ENCODE measurements at regions of chr7 and their contacts with region 1.

Region 1: DNA sequence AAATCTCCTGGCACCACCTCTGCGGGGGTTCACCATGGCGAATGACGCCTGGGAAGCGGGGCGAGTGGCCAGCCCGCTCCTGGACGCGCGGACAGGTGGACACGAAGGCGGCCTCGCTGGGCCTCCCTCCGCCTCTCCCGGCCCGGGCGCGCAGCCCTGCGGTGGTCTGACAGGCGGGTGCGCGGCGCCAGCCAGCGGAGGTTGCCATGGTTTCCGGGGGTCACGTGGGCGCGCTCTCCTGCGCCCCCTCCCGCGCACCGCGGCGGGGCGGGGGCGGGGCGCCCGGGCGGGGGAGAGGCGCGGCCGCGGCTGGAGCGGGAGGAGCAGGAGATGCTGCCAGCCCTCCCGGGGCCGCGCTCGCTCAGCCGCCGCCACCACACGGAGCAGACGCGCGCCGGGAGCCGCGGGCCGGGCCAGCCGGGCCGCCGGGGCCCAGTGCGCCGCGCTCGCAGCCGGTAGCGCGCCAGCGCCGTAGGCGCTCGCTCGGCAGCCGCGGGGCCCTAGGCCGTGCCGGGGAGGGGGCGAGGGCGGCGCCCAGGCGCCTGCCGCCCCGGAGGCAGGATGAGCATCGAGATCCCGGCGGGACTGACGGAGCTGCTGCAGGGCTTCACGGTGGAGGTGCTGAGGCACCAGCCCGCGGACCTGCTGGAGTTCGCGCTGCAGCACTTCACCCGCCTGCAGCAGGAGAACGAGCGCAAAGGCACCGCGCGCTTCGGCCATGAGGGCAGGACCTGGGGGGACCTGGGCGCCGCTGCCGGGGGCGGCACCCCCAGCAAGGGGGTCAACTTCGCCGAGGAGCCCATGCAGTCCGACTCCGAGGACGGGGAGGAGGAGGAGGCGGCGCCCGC is at the start of gene PRKAR2B:
- DNase-seq: peak; percentile 69 to 81 (median 79)
- ATAC-seq: peak; percentile 96
- H3K4me3 ChIP-seq: peak within 1 kb of the TSS; percentile 53
- H3K4me3 Mint-ChIP-seq: peak within 1 kb of the TSS; percentile 78 to 96 (median 90)
- H3K27ac ChIP-seq: peak within 1 kb of the TSS; percentile 33
- H3K27ac Mint-ChIP-seq: peak within 1 kb of the TSS in 7 of 9 donors; percentile 48 to 89 (median 77)
- H3K4me1 ChIP-seq: peaks cover 4 to 10% of the 10 kb centered on the region in 2 donors
- H3K4me1 Mint-ChIP-seq: peaks cover 11 to 19% (median 15%) of the 10 kb centered on the region in 7 donors
- H3K27me3 ChIP-seq: peaks cover 4 to 8% of the 10 kb centered on the region in 2 donors
- H3K27me3 Mint-ChIP-seq: peaks cover 13 to 47% (median 29%) of the 10 kb centered on the region in 5 donors
- total RNA-seq, gene PRKAR2B: 0.43 to 5.0 (median 0.67) TPM

Region 2: DNA sequence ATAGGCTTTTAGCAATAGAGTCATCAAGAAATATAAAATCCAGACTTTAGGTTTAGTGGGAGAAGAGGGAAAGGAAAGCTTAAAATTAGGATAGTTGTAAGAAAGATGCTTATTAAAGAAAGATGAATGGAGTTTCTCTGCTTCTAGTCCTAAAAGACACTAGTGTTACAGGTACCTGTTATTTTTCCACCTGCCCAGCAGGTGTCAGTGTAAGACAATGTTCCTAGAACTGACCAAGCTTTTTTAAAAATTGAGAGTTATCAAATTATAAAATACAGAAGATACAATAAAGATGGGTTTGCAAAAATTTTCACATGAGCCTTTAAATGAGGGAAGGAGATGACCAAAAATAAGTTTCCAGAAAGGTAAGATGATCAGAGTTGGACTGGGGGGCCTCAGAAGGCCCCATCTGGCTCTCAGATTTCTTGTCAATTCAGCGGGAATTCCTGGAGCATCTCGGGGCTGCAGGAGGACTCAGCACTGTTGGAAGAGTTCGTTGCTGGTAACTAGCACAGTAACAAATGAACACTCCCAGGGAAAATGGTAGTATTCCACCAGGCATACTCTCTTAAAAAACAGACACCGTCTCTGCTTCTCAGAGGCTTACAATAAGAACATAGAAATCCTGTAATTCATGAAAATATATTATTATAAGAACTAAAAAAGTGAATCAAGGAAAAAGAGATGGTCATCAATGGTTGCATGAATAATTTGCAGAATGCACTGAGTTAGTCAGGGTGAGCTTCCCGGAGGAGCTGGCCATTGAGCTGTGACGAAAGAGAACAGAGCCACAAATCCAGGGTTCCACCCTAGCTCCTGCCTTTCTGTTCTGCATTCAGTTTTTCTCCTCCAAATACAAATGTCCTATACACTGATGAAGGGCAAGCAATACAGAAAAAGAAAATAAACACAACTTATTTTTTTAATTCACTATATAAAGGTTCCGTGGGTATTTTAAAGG is 251.3 kb before region 1 on chr7:
- CTCF ChIA-PET with region 1: no interaction called
- POLR2A ChIA-PET with region 1: no interaction called
- intact Hi-C with region 1: loop called (anchors 1 to 5 kb)
- DNase-seq: peak in 6 of 9 donors; percentile 31 to 59 (median 51)
- ATAC-seq: peak; percentile 76
- H3K4me3 ChIP-seq: no peak overlapping the region
- H3K4me3 Mint-ChIP-seq: no peak overlapping the region
- H3K27ac ChIP-seq: no peak overlapping the region
- H3K27ac Mint-ChIP-seq: no peak overlapping the region
- H3K4me1 ChIP-seq: no peaks in the 10 kb centered on the region
- H3K4me1 Mint-ChIP-seq: peaks cover 0 to 4% (median 0%) of the 10 kb centered on the region in 7 donors
- H3K27me3 ChIP-seq: no peaks in the 10 kb centered on the region
- H3K27me3 Mint-ChIP-seq: no peaks in the 10 kb centered on the region

Region 3: GRCh38 chr7:106895246-106895864 is 149.2 kb before region 1 on chr7:
- CTCF ChIA-PET with region 1: no interaction called
- POLR2A ChIA-PET with region 1: no interaction called
- intact Hi-C with region 1: loop called in 1 of 2 experiments (anchors 10 kb)
- DNase-seq: no peak
- ATAC-seq: peak; percentile 64
- H3K4me3 ChIP-seq: no peak overlapping the region
- H3K4me3 Mint-ChIP-seq: no peak overlapping the region
- H3K27ac ChIP-seq: no peak overlapping the region
- H3K27ac Mint-ChIP-seq: peak overlapping the region in 1 of 9 donors; percentile 16
- H3K4me1 ChIP-seq: peaks cover 1 to 11% of the 10 kb centered on the region in 2 donors
- H3K4me1 Mint-ChIP-seq: peaks cover 19 to 59% (median 34%) of the 10 kb centered on the region in 7 donors
- H3K27me3 ChIP-seq: no peaks in the 10 kb centered on the region
- H3K27me3 Mint-ChIP-seq: no peaks in the 10 kb centered on the region

Region 4: DNA sequence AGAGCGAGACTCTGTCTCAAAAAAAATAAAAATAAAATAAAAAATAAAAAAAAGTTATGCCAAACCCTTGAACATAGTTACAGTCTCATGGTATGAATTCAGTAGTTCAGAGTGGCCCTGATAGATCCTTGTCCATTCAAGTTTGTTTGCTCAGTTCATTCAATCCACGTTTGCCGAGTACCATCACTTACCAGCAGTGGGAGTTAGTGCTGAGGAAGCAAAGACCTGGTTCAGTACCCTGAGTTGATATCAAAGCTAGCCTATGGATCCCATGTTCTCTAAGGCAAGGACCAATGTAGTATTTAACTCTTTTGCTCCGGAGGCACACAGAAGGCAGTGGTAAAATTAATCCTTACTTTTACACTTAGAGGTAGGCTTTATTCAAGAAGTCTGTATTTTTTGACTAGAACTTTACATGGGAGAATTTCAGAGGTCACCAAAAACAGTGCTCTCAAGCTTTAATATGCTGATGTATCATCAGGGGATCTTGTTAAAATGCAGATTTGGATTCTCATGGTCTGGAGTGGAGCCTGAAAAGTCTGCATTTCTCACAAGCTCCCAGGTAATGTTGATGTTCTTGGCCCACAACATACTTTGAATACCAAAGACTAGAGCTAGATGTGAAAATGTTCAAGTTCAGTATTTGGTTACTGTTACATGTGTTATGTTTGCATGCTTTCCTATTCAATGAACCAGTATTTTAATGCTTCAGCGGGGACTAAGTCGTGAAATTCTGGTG is 86.1 kb after region 1 on chr7:
- CTCF ChIA-PET with region 1: no interaction called
- POLR2A ChIA-PET with region 1: no interaction called
- intact Hi-C with region 1: loop called (anchors 1 kb)
- DNase-seq: no peak
- ATAC-seq: no peak
- H3K4me3 ChIP-seq: no peak overlapping the region
- H3K4me3 Mint-ChIP-seq: no peak overlapping the region
- H3K27ac ChIP-seq: no peak overlapping the region
- H3K27ac Mint-ChIP-seq: no peak overlapping the region
- H3K4me1 ChIP-seq: peaks cover 3 to 12% of the 10 kb centered on the region in 2 donors
- H3K4me1 Mint-ChIP-seq: peaks cover 8 to 23% (median 18%) of the 10 kb centered on the region in 7 donors
- H3K27me3 ChIP-seq: no peaks in the 10 kb centered on the region
- H3K27me3 Mint-ChIP-seq: peaks cover 0 to 10% (median 0%) of the 10 kb centered on the region in 5 donors

Region 5: GRCh38 chr7:107890962-107891635 is 846.5 kb after region 1 on chr7 and contains the start of gene DLD:
- CTCF ChIA-PET with region 1: no interaction called
- POLR2A ChIA-PET with region 1: no interaction called
- intact Hi-C with region 1: loop called in 1 of 2 experiments (anchors 10 kb)
- DNase-seq: peak; percentile 89 to 94 (median 93)
- ATAC-seq: peak; percentile 98
- H3K4me3 ChIP-seq: peak within 1 kb of the TSS; percentile 93
- H3K4me3 Mint-ChIP-seq: peak within 1 kb of the TSS; percentile 89 to 100 (median 97)
- H3K27ac ChIP-seq: peak within 1 kb of the TSS; percentile 97
- H3K27ac Mint-ChIP-seq: peak within 1 kb of the TSS; percentile 94 to 100 (median 98)
- H3K4me1 ChIP-seq: peaks cover 5 to 35% of the 10 kb centered on the region in 2 donors
- H3K4me1 Mint-ChIP-seq: peaks cover 20 to 55% (median 52%) of the 10 kb centered on the region in 7 donors
- H3K27me3 ChIP-seq: no peaks in the 10 kb centered on the region
- H3K27me3 Mint-ChIP-seq: peaks cover 0 to 3% (median 0%) of the 10 kb centered on the region in 5 donors
- total RNA-seq, gene DLD: 44.5 to 69.3 (median 53.7) TPM